CD4-positive, alpha-beta memory T cell (primary cell): ENCODE measurements at regions of chr6 and their contacts with region 1.

Region 1: GRCh38 chr6:108598305-108598863 is 37.7 kb downstream of the FOXO3 start:
- DNase-seq: no peak
- H3K4me3 ChIP-seq: no peak overlapping the region
- H3K4me3 Mint-ChIP-seq: no peak overlapping the region
- H3K27ac ChIP-seq: no peak overlapping the region
- H3K27ac Mint-ChIP-seq: no peak overlapping the region
- H3K4me1 ChIP-seq: peaks cover 6% of the 10 kb centered on the region
- H3K4me1 Mint-ChIP-seq: peaks cover 16 to 49% (median 31%) of the 10 kb centered on the region in 4 donors
- H3K27me3 ChIP-seq: no peaks in the 10 kb centered on the region
- H3K27me3 Mint-ChIP-seq: no peaks in the 10 kb centered on the region

Region 2: DNA sequence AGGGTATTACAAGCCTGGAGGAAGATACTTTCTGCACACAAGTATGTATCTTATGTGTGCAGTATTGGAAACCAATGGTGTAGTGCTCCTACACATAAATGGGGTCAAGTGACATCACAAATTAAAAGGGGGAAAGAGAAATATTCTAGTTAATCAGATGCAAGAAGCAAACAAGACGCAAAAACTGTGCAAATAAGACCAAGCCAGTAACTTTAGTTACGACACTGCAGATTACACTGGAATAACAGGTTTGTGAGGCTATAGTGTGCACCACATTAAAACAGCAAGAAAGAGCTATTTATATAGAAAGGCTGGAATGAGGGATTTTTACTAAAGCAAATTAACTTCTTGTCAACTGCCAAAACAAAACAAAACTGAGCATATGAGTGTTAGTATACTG is 386.7 kb before region 1 on chr6:
- CTCF ChIA-PET with region 1: no interaction called
- POLR2A ChIA-PET with region 1: no interaction called
- intact Hi-C with region 1: no loop called
- DNase-seq: no peak
- H3K4me3 ChIP-seq: no peak overlapping the region
- H3K4me3 Mint-ChIP-seq: no peak overlapping the region
- H3K27ac ChIP-seq: no peak overlapping the region
- H3K27ac Mint-ChIP-seq: no peak overlapping the region
- H3K4me1 ChIP-seq: no peaks in the 10 kb centered on the region
- H3K4me1 Mint-ChIP-seq: peaks cover 0 to 9% (median 1%) of the 10 kb centered on the region in 4 donors
- H3K27me3 ChIP-seq: no peaks in the 10 kb centered on the region
- H3K27me3 Mint-ChIP-seq: no peaks in the 10 kb centered on the region

Region 3: GRCh38 chr6:108331982-108332381 is 266.4 kb before region 1 on chr6:
- CTCF ChIA-PET with region 1: no interaction called
- POLR2A ChIA-PET with region 1: no interaction called
- intact Hi-C with region 1: no loop called
- DNase-seq: no peak
- H3K4me3 ChIP-seq: no peak overlapping the region
- H3K4me3 Mint-ChIP-seq: no peak overlapping the region
- H3K27ac ChIP-seq: no peak overlapping the region
- H3K27ac Mint-ChIP-seq: no peak overlapping the region
- H3K4me1 ChIP-seq: no peaks in the 10 kb centered on the region
- H3K4me1 Mint-ChIP-seq: no peaks in the 10 kb centered on the region
- H3K27me3 ChIP-seq: no peaks in the 10 kb centered on the region
- H3K27me3 Mint-ChIP-seq: no peaks in the 10 kb centered on the region

Region 4: GRCh38 chr6:108630050-108630714 is 31.8 kb after region 1 on chr6:
- CTCF ChIA-PET with region 1: no interaction called
- POLR2A ChIA-PET with region 1: no interaction called
- intact Hi-C with region 1: loop called (anchors 5 kb)
- DNase-seq: peak in 4 of 5 donors; percentile 4 to 25 (median 18)
- H3K4me3 ChIP-seq: no peak overlapping the region
- H3K4me3 Mint-ChIP-seq: peak overlapping the region in 6 of 8 donors; percentile 1 to 56 (median 32)
- H3K27ac ChIP-seq: no peak overlapping the region
- H3K27ac Mint-ChIP-seq: peak overlapping the region in 4 of 7 donors; percentile 1 to 76 (median 30)
- H3K4me1 ChIP-seq: peaks cover 50% of the 10 kb centered on the region
- H3K4me1 Mint-ChIP-seq: peaks cover 63 to 91% (median 76%) of the 10 kb centered on the region in 4 donors
- H3K27me3 ChIP-seq: no peaks in the 10 kb centered on the region
- H3K27me3 Mint-ChIP-seq: no peaks in the 10 kb centered on the region